Cardiac septum (tissue), 1 donor: ENCODE measurements at regions of chr2 and their contacts with region 1.

Region 1: GRCh38 chr2:239326831-239327535 is 73.8 kb downstream of the HDAC4 start:
- DNase-seq: peak; percentile 64

Region 2: GRCh38 chr2:239252801-239253200 is 74.2 kb before region 1 on chr2:
- intact Hi-C with region 1: loop called (anchors 5 kb)
- DNase-seq: peak; percentile 90

Region 3: GRCh38 chr2:239339726-239340601 is 13.0 kb after region 1 on chr2:
- intact Hi-C with region 1: no loop called
- DNase-seq: no peak